ENCODE measurements at regions of chr9 and their contacts with region 1.

Region 1: DNA sequence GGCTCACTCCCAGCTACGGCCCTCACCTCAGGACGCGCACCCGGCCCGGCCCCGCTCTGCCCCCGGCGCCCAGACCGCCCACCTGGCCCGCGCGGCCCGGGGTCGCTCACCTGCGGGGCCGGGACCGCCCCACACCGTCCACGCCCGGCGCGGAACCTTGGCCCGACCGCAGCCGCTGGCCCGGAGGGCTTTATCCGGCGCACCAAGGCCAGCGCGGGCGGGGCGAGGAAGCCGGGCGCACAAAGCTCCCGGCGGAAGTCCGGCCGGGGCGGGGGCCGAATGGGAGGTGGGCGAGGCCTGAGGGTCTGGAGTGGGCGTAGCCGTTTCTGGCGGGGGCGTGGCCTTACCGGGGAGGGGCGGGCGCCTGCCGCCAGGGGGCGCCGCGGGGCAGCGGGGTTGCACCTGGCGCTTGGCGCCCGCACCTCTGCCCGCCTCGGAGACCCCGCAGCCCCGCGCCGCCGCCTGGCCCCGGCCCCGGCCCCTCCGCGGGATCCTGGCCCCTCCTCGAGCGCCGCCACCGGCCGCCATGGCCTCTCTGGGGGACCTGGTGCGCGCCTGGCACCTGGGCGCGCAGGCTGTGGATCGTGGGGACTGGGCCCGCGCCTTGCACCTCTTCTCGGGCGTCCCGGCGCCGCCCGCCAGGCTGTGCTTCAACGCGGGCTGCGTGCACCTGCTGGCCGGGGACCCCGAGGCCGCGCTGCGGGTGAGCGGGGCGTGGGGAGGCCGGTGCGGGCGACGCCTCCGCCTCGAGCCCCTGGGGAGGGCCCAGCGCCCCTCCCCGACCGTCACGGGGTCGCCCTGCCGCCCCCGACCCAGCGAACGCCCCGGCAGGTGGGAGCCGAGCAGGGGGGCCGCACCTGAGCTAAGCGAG is at the starts of genes EXD3 and NOXA1:
- DNase-seq: peak; percentile 97
- H3K4me3 ChIP-seq: peak within 1 kb of the TSS; percentile 59 to 99 (median 97)
- H3K27ac ChIP-seq: peak within 1 kb of the TSS; percentile 83 to 95 (median 90)
- H3K4me1 ChIP-seq: peaks cover 6 to 36% (median 34%) of the 10 kb centered on the region in 4 donors
- H3K27me3 ChIP-seq: no peaks in the 10 kb centered on the region
- CTCF ChIP-seq: peak; percentile 35 to 81 (median 68)
- EP300 ChIP-seq: no peak
- POLR2A ChIP-seq: peak; percentile 18
- total RNA-seq, gene EXD3: 47.6 to 228 (median 74.2) TPM
- total RNA-seq, gene NOXA1: 19.7 to 53.9 (median 40.8) TPM

Region 2: DNA sequence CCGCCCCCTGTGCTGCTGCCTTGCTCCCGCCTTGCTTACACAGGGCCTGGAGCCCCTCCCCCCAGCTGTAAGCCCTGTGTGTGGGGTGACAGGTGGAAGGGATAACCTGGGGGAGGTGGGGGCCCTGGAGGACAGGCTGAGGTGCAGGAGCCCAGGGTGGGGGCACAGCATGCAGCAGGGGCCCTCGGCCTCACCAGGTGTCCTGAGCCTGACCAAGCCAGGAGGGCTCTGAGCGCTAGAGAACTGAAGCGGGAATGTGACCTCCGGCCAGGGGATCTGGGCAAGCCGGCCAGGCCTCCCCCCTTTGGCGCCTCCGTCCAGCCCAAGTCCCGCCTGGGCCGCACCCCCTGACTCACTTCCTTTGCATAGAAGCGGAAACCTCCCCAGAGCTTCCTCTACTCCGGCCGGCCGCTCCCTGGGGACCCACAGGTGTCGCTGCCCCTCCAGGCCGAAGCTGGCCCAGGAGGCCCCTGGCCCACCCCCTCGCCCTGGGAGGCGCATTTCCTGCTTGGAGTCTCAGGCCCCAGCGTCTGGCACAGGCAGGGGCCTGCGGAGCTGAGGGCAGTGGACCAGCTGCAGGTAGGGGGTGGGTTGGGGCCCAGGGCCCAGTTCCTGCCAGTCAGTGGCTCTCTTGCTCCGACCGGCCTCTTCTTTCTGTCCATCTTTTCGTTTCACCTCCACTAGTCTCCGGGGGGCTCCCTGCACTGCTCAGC is 145.8 kb before region 1 on chr9 and contains the start of gene TOR4A:
- in situ Hi-C with region 1: loop called in 2 of 4 experiments (anchors 25 kb)
- intact Hi-C with region 1: no loop called
- DNase-seq: peak; percentile 93
- H3K4me3 ChIP-seq: peak within 1 kb of the TSS; percentile 46 to 74 (median 56)
- H3K27ac ChIP-seq: peak within 1 kb of the TSS; percentile 86 to 95 (median 90)
- H3K4me1 ChIP-seq: peaks cover 13 to 53% (median 30%) of the 10 kb centered on the region in 4 donors
- H3K27me3 ChIP-seq: peaks cover 9% of the 10 kb centered on the region
- CTCF ChIP-seq: peak; percentile 9 to 50 (median 21)
- EP300 ChIP-seq: no peak
- POLR2A ChIP-seq: peak; percentile 91
- total RNA-seq, gene TOR4A: 49.2 to 121 (median 71.7) TPM

Region 3: GRCh38 chr9:137589441-137590115 is 166.3 kb after region 1 on chr9:
- in situ Hi-C with region 1: no loop called
- intact Hi-C with region 1: no loop called
- DNase-seq: no peak
- H3K4me3 ChIP-seq: peak overlapping the region; percentile 66 to 81 (median 72)
- H3K27ac ChIP-seq: peak overlapping the region in 3 of 4 donors; percentile 59 to 79 (median 63)
- H3K4me1 ChIP-seq: peaks cover 6 to 20% (median 17%) of the 10 kb centered on the region in 4 donors
- H3K27me3 ChIP-seq: no peaks in the 10 kb centered on the region
- CTCF ChIP-seq: no peak
- EP300 ChIP-seq: no peak
- POLR2A ChIP-seq: no peak

Measured in transverse colon (tissue), 4 donors.